CD4-positive, alpha-beta T cell (primary cell): ENCODE measurements at regions of chr10 and their contacts with region 1.

Region 1: DNA sequence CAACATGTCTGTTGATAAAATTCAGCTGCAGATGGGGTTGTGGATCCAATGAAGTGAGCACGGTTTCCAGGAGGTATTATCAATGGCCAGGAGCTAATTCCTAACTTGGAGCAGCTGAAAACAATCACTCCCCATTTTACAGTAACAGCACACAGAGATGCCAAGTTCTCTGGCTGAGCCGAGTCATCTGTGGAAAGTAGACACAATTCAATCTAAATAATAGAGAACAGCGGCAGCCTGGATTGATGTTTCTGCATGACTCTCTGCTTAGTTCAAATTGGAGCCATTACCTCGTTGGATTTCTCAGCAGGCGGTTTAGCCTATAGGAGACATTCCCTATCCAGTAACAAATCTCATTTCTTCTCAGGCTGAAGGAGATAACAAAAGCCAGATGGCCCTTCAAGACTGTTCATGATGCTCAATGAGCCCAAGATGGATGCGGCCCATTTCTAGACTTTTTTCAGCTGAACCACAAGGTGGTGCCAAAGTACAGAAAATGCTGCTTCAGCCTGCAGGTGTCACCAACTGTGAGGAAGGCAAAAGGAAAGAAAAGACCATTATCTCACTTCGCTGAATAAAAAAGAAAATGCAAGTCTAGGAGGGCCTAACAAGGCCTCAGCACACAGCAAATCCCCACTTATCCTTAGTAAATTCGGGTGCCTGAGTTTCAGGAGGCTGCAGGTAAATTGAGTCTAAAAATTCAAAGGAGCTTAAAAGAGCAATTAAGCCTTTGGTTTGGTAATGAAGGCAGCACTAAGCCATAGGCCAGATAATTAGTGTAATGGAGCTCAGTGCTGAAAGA is 83.7 kb downstream of the SLC16A9 start:
- DNase-seq: peak in 13 of 14 experiments; percentile 6 to 79 (median 26)
- ATAC-seq: peak; percentile 87
- H3K4me3 ChIP-seq: no peak overlapping the region
- H3K4me3 Mint-ChIP-seq: no peak overlapping the region
- H3K27ac ChIP-seq: no peak overlapping the region
- H3K27ac Mint-ChIP-seq: no peak overlapping the region
- H3K4me1 ChIP-seq: no peaks in the 10 kb centered on the region
- H3K4me1 Mint-ChIP-seq: no peaks in the 10 kb centered on the region
- H3K27me3 ChIP-seq: no peaks in the 10 kb centered on the region
- H3K27me3 Mint-ChIP-seq: peaks cover 2% of the 10 kb centered on the region
- CTCF ChIP-seq: peak; percentile 88

Region 2: GRCh38 chr10:58781873-58782488 is 843.9 kb before region 1 on chr10:
- CTCF ChIA-PET with region 1: no interaction called
- POLR2A ChIA-PET with region 1: no interaction called
- intact Hi-C with region 1: loop called in 1 of 2 experiments (anchors 10 kb)
- DNase-seq: peak in 3 of 14 experiments; percentile 18 to 29 (median 19)
- ATAC-seq: no peak
- H3K4me3 ChIP-seq: no peak overlapping the region
- H3K4me3 Mint-ChIP-seq: no peak overlapping the region
- H3K27ac ChIP-seq: no peak overlapping the region
- H3K27ac Mint-ChIP-seq: no peak overlapping the region
- H3K4me1 ChIP-seq: no peaks in the 10 kb centered on the region
- H3K4me1 Mint-ChIP-seq: no peaks in the 10 kb centered on the region
- H3K27me3 ChIP-seq: no peaks in the 10 kb centered on the region
- H3K27me3 Mint-ChIP-seq: peaks cover 4% of the 10 kb centered on the region
- CTCF ChIP-seq: peak; percentile 36

Region 3: DNA sequence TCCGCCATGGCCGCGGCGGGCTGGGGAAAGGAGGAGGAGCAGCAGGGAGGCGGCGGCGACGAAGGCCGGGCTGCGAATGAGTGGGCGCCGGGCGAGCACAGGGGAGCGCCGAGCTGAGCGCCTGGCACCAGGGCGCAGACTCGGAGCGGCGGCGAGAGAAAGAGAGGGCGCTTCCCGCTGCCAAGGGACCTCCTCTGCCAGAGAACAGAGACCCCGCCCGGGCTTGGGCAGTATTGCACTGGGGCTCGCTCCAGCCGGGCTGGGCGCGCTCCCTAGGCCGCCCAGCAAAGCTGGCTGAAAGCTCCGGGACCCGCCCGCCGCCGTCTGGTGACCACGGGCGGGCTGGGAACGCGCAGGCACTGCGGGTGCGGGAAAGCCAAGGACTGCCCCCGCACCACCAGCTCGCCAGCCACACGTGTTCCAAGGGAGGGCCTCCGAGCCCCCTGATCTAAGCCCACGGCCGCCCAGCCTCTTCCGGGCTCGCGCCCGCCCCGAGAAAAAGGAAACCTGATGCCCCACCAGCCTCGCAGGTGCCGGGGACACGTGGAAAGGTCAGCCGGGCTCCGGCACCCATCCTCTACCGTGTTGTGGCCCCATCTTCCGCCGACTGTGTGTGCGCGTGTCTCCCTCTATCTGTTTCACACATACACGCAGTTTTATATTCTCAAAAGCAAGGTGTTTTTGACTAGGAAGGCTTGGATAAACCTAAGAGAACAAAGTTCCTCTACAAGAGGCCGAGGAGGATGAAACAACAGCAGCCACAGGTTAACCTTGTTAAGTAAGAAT is 280.7 kb after region 1 on chr10 and contains the start of gene CCDC6:
- CTCF ChIA-PET with region 1: no interaction called
- POLR2A ChIA-PET with region 1: interaction called, 3 read pairs
- intact Hi-C with region 1: loop called (anchors 2 kb)
- DNase-seq: peak; percentile 85 to 96 (median 92)
- ATAC-seq: peak; percentile 89
- H3K4me3 ChIP-seq: peak within 1 kb of the TSS; percentile 86
- H3K4me3 Mint-ChIP-seq: peak within 1 kb of the TSS; percentile 91
- H3K27ac ChIP-seq: peak within 1 kb of the TSS; percentile 68 to 83
- H3K27ac Mint-ChIP-seq: peak within 1 kb of the TSS; percentile 89
- H3K4me1 ChIP-seq: peaks cover 39% of the 10 kb centered on the region
- H3K4me1 Mint-ChIP-seq: peaks cover 62% of the 10 kb centered on the region
- H3K27me3 ChIP-seq: no peaks in the 10 kb centered on the region
- H3K27me3 Mint-ChIP-seq: no peaks in the 10 kb centered on the region
- CTCF ChIP-seq: peak; percentile 83
- total RNA-seq, gene CCDC6: 21.6 to 22.1 TPM

Region 4: DNA sequence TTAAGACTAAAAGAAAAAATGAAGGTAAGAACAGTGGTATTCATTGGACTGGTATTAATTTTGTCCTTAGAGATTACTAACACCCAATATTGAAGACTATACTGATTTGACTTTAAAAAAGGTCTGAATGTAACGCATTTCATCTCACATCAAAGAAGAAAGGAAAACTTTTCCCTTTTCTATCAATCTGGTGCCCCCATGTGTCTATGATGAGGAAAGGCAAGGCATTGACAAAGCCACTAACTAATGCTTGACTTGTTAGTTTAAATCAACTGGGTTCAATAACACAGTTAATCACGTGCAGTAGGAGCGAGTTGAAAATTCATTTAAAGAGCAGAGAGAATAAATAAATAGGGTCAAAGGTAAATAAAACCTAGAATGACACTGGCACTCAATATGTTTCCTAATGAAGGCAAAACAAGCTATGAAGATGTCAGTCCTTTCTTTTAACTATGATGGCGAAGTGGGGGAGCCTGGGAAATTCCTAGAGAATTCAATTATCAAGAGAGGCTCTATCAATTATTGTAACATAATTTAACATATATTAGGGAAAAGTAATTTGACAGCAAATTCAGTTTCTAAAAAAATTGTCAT is 582.9 kb after region 1 on chr10:
- CTCF ChIA-PET with region 1: no interaction called
- POLR2A ChIA-PET with region 1: no interaction called
- intact Hi-C with region 1: loop called in 1 of 2 experiments (anchors 5 kb)
- DNase-seq: no peak
- ATAC-seq: no peak
- H3K4me3 ChIP-seq: no peak overlapping the region
- H3K4me3 Mint-ChIP-seq: no peak overlapping the region
- H3K27ac ChIP-seq: no peak overlapping the region
- H3K27ac Mint-ChIP-seq: no peak overlapping the region
- H3K4me1 ChIP-seq: peaks cover 7% of the 10 kb centered on the region
- H3K4me1 Mint-ChIP-seq: peaks cover 31% of the 10 kb centered on the region
- H3K27me3 ChIP-seq: no peaks in the 10 kb centered on the region
- H3K27me3 Mint-ChIP-seq: no peaks in the 10 kb centered on the region
- CTCF ChIP-seq: peak; percentile 27

Region 5: GRCh38 chr10:60769406-60769805 is 1143.5 kb after region 1 on chr10:
- CTCF ChIA-PET with region 1: no interaction called
- POLR2A ChIA-PET with region 1: no interaction called
- intact Hi-C with region 1: loop called (anchors 1 to 5 kb)
- DNase-seq: no peak
- ATAC-seq: no peak
- H3K4me3 ChIP-seq: no peak overlapping the region
- H3K4me3 Mint-ChIP-seq: no peak overlapping the region
- H3K27ac ChIP-seq: no peak overlapping the region
- H3K27ac Mint-ChIP-seq: no peak overlapping the region
- H3K4me1 ChIP-seq: peaks cover 5% of the 10 kb centered on the region
- H3K4me1 Mint-ChIP-seq: peaks cover 20% of the 10 kb centered on the region
- H3K27me3 ChIP-seq: no peaks in the 10 kb centered on the region
- H3K27me3 Mint-ChIP-seq: no peaks in the 10 kb centered on the region
- CTCF ChIP-seq: no peak

Region 6: GRCh38 chr10:61284222-61284890 is 1658.4 kb after region 1 on chr10:
- CTCF ChIA-PET with region 1: no interaction called
- POLR2A ChIA-PET with region 1: no interaction called
- intact Hi-C with region 1: loop called (anchors 10 kb)
- DNase-seq: peak in 3 of 14 experiments; percentile 53 to 65 (median 59)
- ATAC-seq: peak; percentile 31
- H3K4me3 ChIP-seq: peak overlapping the region; percentile 7
- H3K4me3 Mint-ChIP-seq: peak overlapping the region; percentile 74
- H3K27ac ChIP-seq: no peak overlapping the region
- H3K27ac Mint-ChIP-seq: peak overlapping the region; percentile 16
- H3K4me1 ChIP-seq: no peaks in the 10 kb centered on the region
- H3K4me1 Mint-ChIP-seq: peaks cover 26% of the 10 kb centered on the region
- H3K27me3 ChIP-seq: no peaks in the 10 kb centered on the region
- H3K27me3 Mint-ChIP-seq: no peaks in the 10 kb centered on the region
- CTCF ChIP-seq: peak; percentile 93